ENCODE measurements at regions of chr1 and their contacts with region 1.

Region 1: GRCh38 chr1:109790735-109791494 is 27.2 kb upstream of the EPS8L3 start:
- DNase-seq: peak; percentile 82 to 88
- H3K4me3 ChIP-seq: peak overlapping the region; percentile 36; the same call in 1 of the 2 replicates
- H3K27ac ChIP-seq: peak overlapping the region; percentile 95
- H3K4me1 ChIP-seq: peaks cover 94% of the 10 kb centered on the region
- H3K27me3 ChIP-seq: no peaks in the 10 kb centered on the region
- CTCF ChIP-seq: peak; percentile 61

Region 2: GRCh38 chr1:109385417-109385816 is 405.5 kb before region 1 on chr1:
- CTCF ChIA-PET with region 1: no interaction called
- POLR2A ChIA-PET with region 1: no interaction called
- intact Hi-C with region 1: no loop called
- DNase-seq: no peak
- H3K4me3 ChIP-seq: no peak overlapping the region
- H3K27ac ChIP-seq: no peak overlapping the region
- H3K4me1 ChIP-seq: peaks cover 16% of the 10 kb centered on the region; the same call in 1 of the 2 replicates
- H3K27me3 ChIP-seq: no peaks in the 10 kb centered on the region
- CTCF ChIP-seq: no peak

Region 3: GRCh38 chr1:109472779-109473178 is 318.1 kb before region 1 on chr1:
- CTCF ChIA-PET with region 1: no interaction called
- POLR2A ChIA-PET with region 1: interaction called, 24 read pairs
- intact Hi-C with region 1: no loop called
- DNase-seq: no peak
- H3K4me3 ChIP-seq: no peak overlapping the region
- H3K27ac ChIP-seq: no peak overlapping the region
- H3K4me1 ChIP-seq: peaks cover 7% of the 10 kb centered on the region
- H3K27me3 ChIP-seq: peaks cover 97% of the 10 kb centered on the region
- CTCF ChIP-seq: no peak

Region 4: DNA sequence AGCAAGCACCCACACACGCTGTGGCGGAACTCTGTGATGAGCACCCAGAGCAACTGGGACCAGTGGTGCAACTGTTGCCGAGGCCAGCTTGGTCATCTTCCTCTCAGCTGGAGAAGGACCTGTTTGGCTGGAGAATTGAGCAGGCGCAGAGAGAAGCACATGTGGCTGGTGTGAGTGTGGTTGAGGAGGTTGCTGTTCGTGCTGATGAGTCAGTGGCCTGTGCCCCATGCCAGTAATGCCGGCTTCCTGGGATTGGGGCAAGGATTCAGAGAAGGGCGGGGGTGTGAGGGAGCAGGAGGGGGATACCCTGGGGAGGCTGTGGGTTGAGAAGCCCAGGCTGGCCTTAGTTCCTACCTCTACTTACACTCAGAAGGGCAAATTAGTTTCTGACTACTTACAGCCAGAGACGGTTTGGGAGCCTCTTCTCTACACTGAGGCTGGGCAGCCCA is 30.3 kb after region 1 on chr1:
- CTCF ChIA-PET with region 1: interaction called, 5 read pairs
- POLR2A ChIA-PET with region 1: interaction called, 13 read pairs
- intact Hi-C with region 1: loop called (anchors 1 kb)
- DNase-seq: peak; percentile 88 to 97
- H3K4me3 ChIP-seq: no peak overlapping the region
- H3K27ac ChIP-seq: peak overlapping the region; percentile 85
- H3K4me1 ChIP-seq: peaks cover 61% of the 10 kb centered on the region
- H3K27me3 ChIP-seq: no peaks in the 10 kb centered on the region
- CTCF ChIP-seq: no peak

Region 5: GRCh38 chr1:109904105-109904817 is 113.3 kb after region 1 on chr1:
- CTCF ChIA-PET with region 1: no interaction called
- POLR2A ChIA-PET with region 1: interaction called, 13 read pairs
- intact Hi-C with region 1: no loop called
- DNase-seq: no peak
- H3K4me3 ChIP-seq: no peak overlapping the region
- H3K27ac ChIP-seq: no peak overlapping the region
- H3K4me1 ChIP-seq: peaks cover 33% of the 10 kb centered on the region
- H3K27me3 ChIP-seq: no peaks in the 10 kb centered on the region
- CTCF ChIP-seq: no peak

Region 6: DNA sequence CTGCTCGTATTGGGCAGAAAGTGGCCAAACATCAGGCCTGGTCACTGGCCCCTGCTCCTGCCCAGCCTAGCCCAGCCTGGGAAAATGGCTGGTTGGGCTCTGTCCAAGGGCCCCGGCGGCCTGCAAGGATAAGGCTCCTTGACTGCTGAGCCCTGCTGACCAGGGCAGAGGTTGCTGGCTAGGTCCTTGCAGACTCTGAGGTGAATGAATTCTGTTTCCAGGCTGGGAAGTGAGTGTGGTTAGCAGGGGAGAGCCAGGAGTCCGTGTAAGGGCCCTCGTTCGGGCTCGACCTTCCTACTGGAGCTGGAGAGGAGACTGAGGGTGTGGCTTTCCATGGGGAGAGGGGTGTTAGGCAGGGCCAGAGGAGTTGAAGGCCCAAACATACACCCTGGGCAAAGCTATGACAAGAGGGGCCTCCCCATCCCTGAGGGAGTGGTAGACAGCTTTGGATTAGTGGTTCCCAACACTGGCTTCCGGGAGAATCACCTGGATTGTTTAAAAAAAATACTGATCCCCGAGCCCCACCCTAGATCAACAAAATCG is 140.3 kb after region 1 on chr1:
- CTCF ChIA-PET with region 1: no interaction called
- POLR2A ChIA-PET with region 1: interaction called, 3 read pairs
- intact Hi-C with region 1: loop called (anchors 1 kb)
- DNase-seq: peak; percentile 93
- H3K4me3 ChIP-seq: no peak overlapping the region; the same call in 1 of the 2 replicates
- H3K27ac ChIP-seq: peak overlapping the region; percentile 80
- H3K4me1 ChIP-seq: peaks cover 85% of the 10 kb centered on the region
- H3K27me3 ChIP-seq: no peaks in the 10 kb centered on the region
- CTCF ChIP-seq: no peak

Measured in PC-9 (cell line).